GM23248 (cell line): ENCODE measurements at regions of chr15 and their contacts with region 1.

Region 1: GRCh38 chr15:31280046-31280830 is 46.4 kb upstream of the KLF13 start:
- DNase-seq: no peak
- H3K4me3 ChIP-seq: no peak overlapping the region
- H3K27ac ChIP-seq: no peak overlapping the region
- H3K4me1 ChIP-seq: no peaks in the 10 kb centered on the region
- H3K27me3 ChIP-seq: no peaks in the 10 kb centered on the region

Region 2: GRCh38 chr15:31228985-31229826 is 51.0 kb before region 1 on chr15:
- in situ Hi-C with region 1: loop called (anchors 10 kb)
- DNase-seq: peak; percentile 22
- H3K4me3 ChIP-seq: no peak overlapping the region
- H3K27ac ChIP-seq: no peak overlapping the region
- H3K4me1 ChIP-seq: no peaks in the 10 kb centered on the region
- H3K27me3 ChIP-seq: peaks cover 4% of the 10 kb centered on the region; the same call in 1 of the 2 replicates